ENCODE measurements at regions of chr7 and their contacts with region 1.

Region 1: DNA sequence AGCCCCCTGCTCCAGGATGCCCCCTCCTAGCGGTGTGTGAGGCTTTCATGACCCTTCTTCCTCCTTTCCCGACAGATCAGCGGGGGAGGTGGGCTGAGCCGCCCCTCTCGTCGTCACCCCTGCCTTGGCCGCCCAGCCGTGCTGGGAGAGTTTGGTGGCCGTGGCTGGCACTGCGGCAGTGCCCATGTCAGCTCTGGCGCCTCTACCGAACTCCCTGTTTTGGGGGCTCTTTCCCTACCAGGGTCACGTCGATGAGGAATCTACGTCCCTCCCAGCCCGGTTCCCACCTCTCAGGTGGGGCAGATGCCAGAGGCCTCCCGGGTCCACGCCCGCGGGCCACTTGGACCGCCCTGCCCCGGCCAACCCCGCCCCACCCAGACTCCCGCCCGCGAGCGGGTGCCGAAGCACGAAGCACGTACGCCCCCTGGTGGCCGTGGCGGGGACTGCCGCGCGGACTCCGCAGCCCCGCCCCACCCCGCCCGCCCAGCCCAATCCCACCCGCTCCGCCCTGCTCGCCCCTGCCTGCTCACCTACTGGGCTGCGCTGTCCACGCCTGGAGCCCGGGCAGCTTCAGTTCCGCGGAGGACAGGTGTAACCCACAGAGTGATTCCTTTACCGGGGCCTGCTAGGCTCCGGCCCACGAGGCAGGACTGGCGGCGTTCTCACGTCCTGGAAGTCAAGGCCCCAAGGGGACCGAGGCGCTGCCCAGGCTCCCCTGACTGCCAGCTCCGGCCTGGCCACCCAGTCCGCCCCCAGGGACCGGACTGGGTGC is 127.1 kb downstream of the UBE2H start:
- DNase-seq: peak; percentile 91
- CTCF ChIP-seq: peak; percentile 66

Region 2: DNA sequence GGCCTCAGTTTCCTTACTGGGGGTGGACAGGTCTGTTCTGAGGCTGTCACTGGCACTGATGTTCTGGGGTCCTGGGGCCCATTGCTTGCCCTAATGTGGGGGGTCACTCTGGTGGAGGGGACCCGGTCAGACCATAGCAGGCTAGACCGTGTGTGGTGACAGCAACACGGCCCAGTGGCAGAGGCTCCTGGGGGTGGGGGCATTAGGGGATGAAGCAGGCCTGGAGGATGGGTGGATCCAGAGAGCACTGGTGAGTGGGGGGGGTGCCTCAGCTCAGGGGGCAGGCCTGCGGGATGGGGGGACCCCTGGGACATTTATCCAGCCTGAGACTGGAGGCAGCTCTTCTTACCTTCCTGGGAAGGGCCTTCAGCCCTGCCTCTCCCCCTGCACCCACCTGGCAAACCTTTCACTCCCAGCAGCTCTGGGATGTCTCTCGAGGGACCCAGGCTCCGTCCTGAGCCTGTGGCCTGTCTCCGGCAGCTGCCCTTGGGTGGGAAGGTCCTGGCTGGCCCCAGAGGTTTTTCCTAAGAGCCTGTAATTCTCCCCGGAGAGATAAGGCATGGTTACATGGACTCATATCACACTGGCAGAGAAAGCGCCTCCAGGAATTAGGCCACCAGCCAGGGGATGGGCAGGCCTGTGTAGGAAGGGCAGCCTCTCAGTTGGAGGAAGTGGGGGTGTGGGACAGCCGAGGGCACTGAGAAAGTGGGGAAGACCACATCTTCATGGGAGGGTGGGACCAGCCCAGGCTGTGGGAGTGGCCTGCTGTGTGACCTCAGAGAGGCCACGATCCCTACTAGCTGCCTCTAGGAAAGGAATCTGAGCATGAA is 20.6 kb before region 1 on chr7:
- CTCF ChIA-PET with region 1: interaction called, 12 read pairs
- POLR2A ChIA-PET with region 1: no interaction called
- DNase-seq: no peak
- CTCF ChIP-seq: no peak

Region 3: GRCh38 chr7:129840757-129841156 is 15.1 kb after region 1 on chr7:
- CTCF ChIA-PET with region 1: interaction called, 31 read pairs
- POLR2A ChIA-PET with region 1: no interaction called
- DNase-seq: no peak
- CTCF ChIP-seq: no peak

Region 4: DNA sequence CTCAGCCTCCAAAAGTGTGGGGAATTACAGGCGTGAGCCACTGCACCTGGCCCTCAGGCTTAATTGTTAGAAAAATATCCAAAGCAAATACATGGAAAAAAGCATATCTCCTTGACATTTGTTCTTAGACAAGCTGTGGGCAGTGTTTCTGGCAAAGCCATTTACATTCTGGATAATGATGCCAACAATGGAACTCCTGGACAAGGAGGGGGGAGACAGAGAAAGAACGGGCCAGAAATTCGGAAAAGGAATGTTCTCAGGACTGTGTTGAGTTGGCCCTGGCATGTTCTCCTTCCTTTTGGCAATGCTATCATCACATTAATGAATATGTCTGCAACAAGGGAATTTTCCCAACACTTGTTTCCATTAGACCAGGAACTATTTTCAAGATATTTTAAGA is 38.4 kb after region 1 on chr7:
- CTCF ChIA-PET with region 1: interaction called, 12 read pairs
- POLR2A ChIA-PET with region 1: no interaction called
- DNase-seq: no peak
- CTCF ChIP-seq: no peak

Region 5: GRCh38 chr7:129906700-129907099 is 81.0 kb after region 1 on chr7:
- CTCF ChIA-PET with region 1: no interaction called
- POLR2A ChIA-PET with region 1: no interaction called
- DNase-seq: no peak
- CTCF ChIP-seq: no peak

Measured in GM10248 (cell line).